MCF 10A (cell line): ENCODE measurements at regions of chr20 and their contacts with region 1.

Region 1: DNA sequence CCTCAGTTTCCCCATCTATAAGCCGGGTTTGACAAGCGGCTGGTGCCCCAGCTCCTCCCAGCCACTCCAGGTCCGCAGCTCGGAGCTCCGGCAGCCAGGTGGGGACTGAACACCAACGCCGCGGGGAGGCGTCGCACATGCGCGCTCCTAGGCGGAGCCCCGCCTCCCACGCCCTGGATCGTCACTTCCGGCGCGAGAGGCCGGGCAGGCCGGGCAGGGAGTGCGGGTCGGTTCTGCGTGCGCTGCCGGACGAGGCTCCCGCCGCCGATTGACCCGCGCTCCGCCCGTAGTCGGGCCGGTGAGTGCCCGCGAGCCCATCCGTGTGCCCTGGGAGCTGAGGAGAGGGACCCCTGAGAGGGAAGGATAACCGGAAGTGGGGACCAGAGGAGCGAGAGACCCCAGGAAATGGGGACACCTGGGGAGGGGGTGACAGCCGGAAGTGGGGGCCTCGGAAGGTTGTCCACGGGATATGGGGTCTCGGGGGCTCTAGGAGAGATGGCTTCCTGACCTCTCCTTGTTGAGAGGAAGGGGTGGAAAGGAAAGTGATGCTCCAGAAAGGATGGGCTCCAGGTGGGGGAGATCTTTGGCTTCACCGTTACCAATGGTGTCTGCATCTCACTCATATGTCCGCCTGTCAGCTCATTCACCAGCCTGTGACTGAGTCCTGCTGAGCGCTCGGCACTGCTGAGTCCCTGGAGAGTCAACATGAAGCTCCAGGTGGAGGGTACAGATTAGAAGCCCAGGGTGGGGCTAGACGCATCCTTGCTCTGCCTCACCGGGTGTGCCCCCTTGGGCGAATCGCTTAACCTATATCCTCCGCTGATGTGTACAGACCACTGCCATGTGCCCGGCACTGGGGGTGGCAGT is at the start of gene TTPAL:
- DNase-seq: peak; percentile 89
- H3K4me3 Mint-ChIP-seq: peak within 1 kb of the TSS; percentile 98
- H3K27ac Mint-ChIP-seq: peak within 1 kb of the TSS; percentile 98
- H3K4me1 Mint-ChIP-seq: peaks cover 23% of the 10 kb centered on the region
- H3K27me3 Mint-ChIP-seq: no peaks in the 10 kb centered on the region
- CTCF ChIP-seq: no peak
- total RNA-seq, gene TTPAL: 34.1 and 35.4 TPM in 2 replicates

Region 2: DNA sequence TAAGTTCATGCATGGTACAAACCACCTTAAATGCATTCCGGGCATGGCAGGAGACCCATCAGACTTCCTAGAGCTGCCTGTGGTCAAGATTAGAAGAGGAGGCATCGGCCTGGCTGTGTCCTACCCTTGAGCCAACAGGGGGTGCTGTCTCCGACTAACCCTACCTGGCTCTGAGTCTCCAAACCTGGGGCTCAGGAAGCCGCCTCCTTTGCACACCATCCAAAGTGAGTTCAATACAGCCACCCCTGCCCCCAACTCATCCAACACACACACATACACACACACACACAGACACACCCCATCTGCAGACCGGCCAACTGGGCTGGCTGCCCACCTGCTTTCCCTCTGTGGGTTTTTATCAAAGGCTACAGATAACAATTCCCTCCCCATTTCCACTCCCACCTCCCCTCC is 366.0 kb before region 1 on chr20:
- CTCF ChIA-PET with region 1: interaction called, 5 read pairs
- POLR2A ChIA-PET with region 1: interaction called, 3 read pairs
- intact Hi-C with region 1: loop called (anchors 10 kb)
- DNase-seq: no peak
- H3K4me3 Mint-ChIP-seq: no peak overlapping the region
- H3K27ac Mint-ChIP-seq: no peak overlapping the region
- H3K4me1 Mint-ChIP-seq: peaks cover 20% of the 10 kb centered on the region
- H3K27me3 Mint-ChIP-seq: no peaks in the 10 kb centered on the region
- CTCF ChIP-seq: peak; percentile 10

Region 3: DNA sequence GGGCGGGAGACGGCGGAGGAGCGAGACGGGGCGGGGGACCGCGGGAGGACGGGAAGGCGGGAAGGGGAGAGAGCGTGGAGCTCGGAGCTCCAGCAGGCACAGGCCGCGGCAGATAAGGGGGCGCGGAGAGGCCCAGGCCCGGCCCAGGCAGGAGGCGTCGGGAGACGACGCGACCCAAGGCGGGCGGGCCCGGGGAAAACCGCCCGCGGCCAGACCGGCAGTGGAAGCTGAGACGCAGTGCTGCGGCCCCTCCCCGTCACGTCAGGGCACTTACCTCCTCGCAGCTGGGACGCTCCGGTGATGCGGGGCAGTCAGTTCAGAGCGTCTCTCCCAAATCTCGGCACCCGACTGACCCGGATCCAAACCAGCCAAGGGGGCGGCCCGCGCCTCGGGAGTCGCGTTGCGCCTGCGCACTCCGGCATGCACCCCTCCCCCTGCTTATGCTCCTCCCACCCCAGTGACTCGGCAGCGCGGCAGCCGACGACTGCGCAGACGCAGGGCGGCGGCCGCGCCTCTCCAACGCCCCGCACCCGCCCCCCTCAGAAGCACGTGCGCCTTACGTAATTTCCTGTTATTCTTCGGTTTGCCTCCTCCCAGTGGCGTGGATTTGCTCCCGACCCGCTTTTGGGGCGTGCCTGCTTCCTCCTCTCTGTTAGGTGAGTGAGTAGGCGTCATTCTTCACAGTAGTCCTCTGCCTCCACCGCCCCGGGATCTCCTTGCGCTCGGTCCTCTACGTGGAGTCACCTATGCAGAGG is 265.3 kb before region 1 on chr20 and contains the start of gene OSER1:
- CTCF ChIA-PET with region 1: interaction called, 347 read pairs
- POLR2A ChIA-PET with region 1: interaction called, 29 read pairs
- intact Hi-C with region 1: no loop called
- DNase-seq: peak; percentile 99
- H3K4me3 Mint-ChIP-seq: peak within 1 kb of the TSS; percentile 100
- H3K27ac Mint-ChIP-seq: peak within 1 kb of the TSS; percentile 100
- H3K4me1 Mint-ChIP-seq: peaks cover 39% of the 10 kb centered on the region
- H3K27me3 Mint-ChIP-seq: no peaks in the 10 kb centered on the region
- CTCF ChIP-seq: no peak
- total RNA-seq, gene OSER1: 45.4 and 50.8 TPM in 2 replicates

Region 4: DNA sequence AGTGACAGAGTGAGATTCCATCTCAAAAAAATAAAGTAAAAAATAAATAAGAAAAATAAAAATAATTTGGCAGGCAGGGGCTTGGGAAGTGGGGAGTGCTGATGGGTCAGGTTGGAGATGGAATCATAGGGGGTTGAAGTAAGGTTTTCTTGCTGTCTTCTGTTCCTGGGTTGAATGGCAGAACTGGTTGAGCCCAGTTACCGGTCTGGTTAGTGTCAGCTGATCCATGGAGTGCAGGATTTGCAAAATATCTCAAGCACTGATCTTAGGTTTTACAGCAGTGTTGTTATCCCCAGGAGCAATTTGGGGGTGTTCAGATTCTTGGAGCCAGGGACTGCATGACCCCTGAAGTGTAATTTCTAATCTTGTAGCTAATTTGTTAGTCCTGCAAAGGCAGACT is 181.3 kb before region 1 on chr20:
- CTCF ChIA-PET with region 1: no interaction called
- POLR2A ChIA-PET with region 1: no interaction called
- intact Hi-C with region 1: no loop called
- DNase-seq: no peak
- H3K4me3 Mint-ChIP-seq: no peak overlapping the region
- H3K27ac Mint-ChIP-seq: no peak overlapping the region
- H3K4me1 Mint-ChIP-seq: no peaks in the 10 kb centered on the region
- H3K27me3 Mint-ChIP-seq: no peaks in the 10 kb centered on the region
- CTCF ChIP-seq: no peak

Region 5: DNA sequence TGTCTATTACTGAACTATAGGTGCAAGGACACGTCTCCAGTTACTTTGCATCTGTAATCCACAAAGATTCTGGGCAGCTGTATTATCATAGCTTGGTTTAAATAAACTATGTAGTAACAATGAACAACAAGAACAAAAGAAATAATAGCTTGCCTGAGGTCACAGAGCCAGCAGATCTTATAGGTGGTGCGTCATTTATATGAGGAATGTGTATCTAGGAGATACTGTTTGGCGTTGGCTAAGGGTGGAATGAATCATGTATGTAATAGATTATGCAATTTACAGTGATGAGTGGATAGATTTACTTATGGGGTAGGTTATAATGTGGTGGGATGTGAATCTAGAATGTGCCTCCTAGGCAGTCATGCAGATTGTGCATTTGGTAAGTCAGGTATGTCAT is 77.6 kb before region 1 on chr20:
- CTCF ChIA-PET with region 1: interaction called, 155 read pairs
- POLR2A ChIA-PET with region 1: interaction called, 6 read pairs
- intact Hi-C with region 1: no loop called
- DNase-seq: peak; percentile 93
- H3K4me3 Mint-ChIP-seq: no peak overlapping the region
- H3K27ac Mint-ChIP-seq: peak overlapping the region; percentile 58
- H3K4me1 Mint-ChIP-seq: peaks cover 10% of the 10 kb centered on the region
- H3K27me3 Mint-ChIP-seq: no peaks in the 10 kb centered on the region
- CTCF ChIP-seq: no peak

Region 6: GRCh38 chr20:44407402-44408184 is 68.3 kb before region 1 on chr20:
- CTCF ChIA-PET with region 1: interaction called, 7 read pairs
- POLR2A ChIA-PET with region 1: interaction called, 20 read pairs
- intact Hi-C with region 1: no loop called
- DNase-seq: peak; percentile 95
- H3K4me3 Mint-ChIP-seq: no peak overlapping the region
- H3K27ac Mint-ChIP-seq: peak overlapping the region; percentile 59
- H3K4me1 Mint-ChIP-seq: peaks cover 19% of the 10 kb centered on the region
- H3K27me3 Mint-ChIP-seq: no peaks in the 10 kb centered on the region
- CTCF ChIP-seq: no peak

Region 7: GRCh38 chr20:44420497-44420896 is 55.4 kb before region 1 on chr20:
- CTCF ChIA-PET with region 1: no interaction called
- POLR2A ChIA-PET with region 1: no interaction called
- intact Hi-C with region 1: no loop called
- DNase-seq: no peak
- H3K4me3 Mint-ChIP-seq: no peak overlapping the region
- H3K27ac Mint-ChIP-seq: no peak overlapping the region
- H3K4me1 Mint-ChIP-seq: peaks cover 6% of the 10 kb centered on the region
- H3K27me3 Mint-ChIP-seq: no peaks in the 10 kb centered on the region
- CTCF ChIP-seq: no peak

Region 8: DNA sequence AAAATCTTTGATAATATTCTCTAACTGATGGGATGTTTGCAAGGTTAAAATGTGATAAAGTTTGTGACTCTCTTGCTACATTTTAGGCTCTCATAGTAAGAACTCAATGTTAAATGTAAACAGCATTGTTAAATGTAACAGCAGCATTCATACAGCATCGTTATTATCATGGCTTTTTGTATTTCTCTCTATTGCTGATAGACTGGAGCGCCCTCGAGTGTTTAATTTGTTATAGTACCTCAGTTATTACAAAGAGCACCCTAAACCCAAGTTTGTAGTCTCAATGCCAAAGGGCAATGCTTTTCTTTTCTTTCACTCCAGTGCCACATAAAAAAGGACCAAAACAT is 15.2 kb before region 1 on chr20:
- CTCF ChIA-PET with region 1: interaction called, 29 read pairs
- POLR2A ChIA-PET with region 1: interaction called, 12 read pairs
- intact Hi-C with region 1: no loop called
- DNase-seq: peak; percentile 64
- H3K4me3 Mint-ChIP-seq: no peak overlapping the region
- H3K27ac Mint-ChIP-seq: no peak overlapping the region
- H3K4me1 Mint-ChIP-seq: peaks cover 13% of the 10 kb centered on the region
- H3K27me3 Mint-ChIP-seq: no peaks in the 10 kb centered on the region
- CTCF ChIP-seq: peak; percentile 66

Region 9: GRCh38 chr20:44495802-44496481 is 20.0 kb after region 1 on chr20:
- CTCF ChIA-PET with region 1: interaction called, 6 read pairs
- POLR2A ChIA-PET with region 1: interaction called, 46 read pairs
- intact Hi-C with region 1: no loop called
- DNase-seq: peak; percentile 95
- H3K4me3 Mint-ChIP-seq: peak overlapping the region; percentile 26
- H3K27ac Mint-ChIP-seq: peak overlapping the region; percentile 84
- H3K4me1 Mint-ChIP-seq: peaks cover 47% of the 10 kb centered on the region
- H3K27me3 Mint-ChIP-seq: no peaks in the 10 kb centered on the region
- CTCF ChIP-seq: no peak

Region 10: GRCh38 chr20:44728801-44729342 is 252.9 kb after region 1 on chr20:
- CTCF ChIA-PET with region 1: no interaction called
- POLR2A ChIA-PET with region 1: no interaction called
- intact Hi-C with region 1: no loop called
- DNase-seq: peak; percentile 99
- H3K4me3 Mint-ChIP-seq: peak overlapping the region; percentile 71
- H3K27ac Mint-ChIP-seq: peak overlapping the region; percentile 70
- H3K4me1 Mint-ChIP-seq: peaks cover 41% of the 10 kb centered on the region
- H3K27me3 Mint-ChIP-seq: no peaks in the 10 kb centered on the region
- CTCF ChIP-seq: no peak

Region 11: GRCh38 chr20:44924570-44924969 is 448.6 kb after region 1 on chr20:
- CTCF ChIA-PET with region 1: no interaction called
- POLR2A ChIA-PET with region 1: no interaction called
- intact Hi-C with region 1: no loop called
- DNase-seq: no peak
- H3K4me3 Mint-ChIP-seq: no peak overlapping the region
- H3K27ac Mint-ChIP-seq: no peak overlapping the region
- H3K4me1 Mint-ChIP-seq: no peaks in the 10 kb centered on the region
- H3K27me3 Mint-ChIP-seq: no peaks in the 10 kb centered on the region
- CTCF ChIP-seq: no peak